Aorta (tissue), 5 donors: ENCODE measurements at regions of chr11 and their contacts with region 1.

Region 1: DNA sequence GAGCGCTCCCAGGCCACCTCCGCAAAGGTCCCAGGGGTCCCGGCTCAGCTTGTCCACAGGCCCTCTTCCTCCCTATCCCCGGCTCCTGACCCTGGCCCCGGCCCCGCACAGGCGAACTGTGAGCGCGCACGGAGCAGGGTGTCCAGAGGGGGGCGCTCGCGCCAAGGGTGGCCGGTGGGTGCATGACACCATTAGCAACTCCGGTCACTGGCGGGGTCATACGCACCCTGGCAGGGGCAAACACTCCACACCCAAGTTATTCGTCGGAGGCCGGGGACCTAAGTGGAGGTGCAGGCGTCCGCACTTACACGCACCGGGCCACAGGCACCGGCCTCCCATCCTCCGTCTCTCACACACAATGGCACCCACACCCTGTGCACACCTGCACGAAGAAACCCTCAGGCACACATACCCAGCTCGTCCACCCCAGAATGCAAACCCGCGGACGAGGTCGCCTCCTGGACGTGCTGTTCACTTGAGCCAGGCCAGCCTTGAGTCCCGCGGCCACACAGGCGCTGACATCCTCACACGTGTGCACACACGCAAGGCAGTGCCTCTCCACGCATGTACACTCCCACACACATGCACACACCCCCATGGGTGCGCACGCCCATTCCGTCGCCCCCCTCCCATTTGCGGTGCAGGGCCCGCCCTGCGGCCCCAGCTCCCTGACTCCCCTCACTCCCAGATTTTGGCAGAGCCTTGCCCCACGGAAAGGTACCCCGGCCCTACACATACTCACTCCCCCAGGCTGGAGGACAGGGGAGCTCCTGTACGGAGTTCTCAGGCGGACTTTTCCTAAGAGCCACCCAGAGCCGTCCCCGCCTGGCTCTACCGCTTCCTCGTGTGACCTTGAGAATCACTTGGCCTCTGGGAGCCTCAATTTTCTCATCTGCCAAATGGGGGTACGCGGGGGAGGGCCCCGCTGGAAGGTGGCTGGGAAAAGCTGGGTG is at the start of gene RASGRP2:
- DNase-seq: peak; percentile 90 to 96
- ATAC-seq: peak; percentile 75
- H3K4me3 ChIP-seq: peak within 1 kb of the TSS; percentile 65 to 91
- H3K27ac ChIP-seq: peak within 1 kb of the TSS; percentile 88 to 91
- H3K4me1 ChIP-seq: no peaks in the 10 kb centered on the region
- H3K27me3 ChIP-seq: no peaks in the 10 kb centered on the region
- total RNA-seq, gene RASGRP2: 44.7 to 52.6 TPM

Region 2: DNA sequence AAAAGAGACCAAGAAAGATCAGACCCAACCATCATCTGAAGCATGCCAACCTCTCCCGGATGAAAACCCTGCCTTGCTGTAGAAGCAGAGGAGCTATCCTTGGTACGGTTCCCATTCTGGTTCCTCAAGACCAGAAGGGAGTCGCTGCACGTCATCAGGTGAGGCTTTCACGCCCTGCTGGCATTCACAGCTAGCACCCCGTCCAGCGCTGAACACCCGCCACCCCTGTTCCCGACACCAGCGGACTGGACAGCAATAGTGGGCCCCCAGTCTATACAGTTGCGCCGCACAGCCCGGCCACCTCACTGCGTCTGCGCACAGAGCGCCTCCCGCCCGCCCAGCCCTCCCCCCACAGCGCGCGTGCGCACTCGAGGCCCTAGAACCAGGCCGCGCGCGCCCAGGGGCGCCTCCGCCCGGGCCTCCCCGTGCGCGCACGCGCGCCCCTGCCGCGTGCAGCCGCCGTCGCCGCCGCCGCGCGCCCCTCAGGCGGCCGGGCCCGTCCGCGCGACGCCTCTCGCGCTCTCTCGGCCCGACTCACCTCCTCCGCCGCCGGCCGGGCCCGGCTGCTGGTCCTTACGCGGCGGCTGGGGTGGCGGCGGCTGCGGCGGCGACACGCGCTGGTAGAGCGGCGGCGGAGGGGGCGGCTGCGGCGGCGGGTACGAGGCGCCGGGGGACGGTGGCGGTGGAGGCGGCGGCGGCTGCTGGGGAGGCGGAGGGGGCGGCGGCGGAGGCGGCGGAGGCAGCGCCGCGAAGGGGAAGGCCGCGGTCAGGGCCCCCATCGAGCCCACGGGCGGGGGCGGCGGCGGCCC is 33.8 kb after region 1 on chr11:
- intact Hi-C with region 1: loop called in 1 of 2 experiments (anchors 2 kb)
- DNase-seq: peak; percentile 89 to 94
- ATAC-seq: peak; percentile 47
- H3K4me3 ChIP-seq: peak overlapping the region; percentile 99 to 100
- H3K27ac ChIP-seq: peak overlapping the region; percentile 99
- H3K4me1 ChIP-seq: peaks cover 0 to 7% of the 10 kb centered on the region in 2 donors
- H3K27me3 ChIP-seq: no peaks in the 10 kb centered on the region